Mammary epithelial cell (primary cell): ENCODE measurements at regions of chr6 and their contacts with region 1.

Region 1: GRCh38 chr6:129498950-129499842 is 210.8 kb downstream of the ARHGAP18 start:
- DNase-seq: peak; percentile 75
- H3K4me3 ChIP-seq: peak overlapping the region; percentile 4 to 23 (median 7)
- H3K27ac ChIP-seq: peak overlapping the region; percentile 90
- H3K4me1 ChIP-seq: peaks cover 68% of the 10 kb centered on the region
- H3K27me3 ChIP-seq: no peaks in the 10 kb centered on the region
- CTCF ChIP-seq: peak; percentile 32 to 54

Region 2: GRCh38 chr6:129469070-129469662 is 30.0 kb before region 1 on chr6:
- CTCF ChIA-PET with region 1: no interaction called
- dilution Hi-C with region 1: no loop called
- in situ Hi-C with region 1: no loop called
- intact Hi-C with region 1: loop called (anchors 1 kb)
- DNase-seq: peak; percentile 11
- H3K4me3 ChIP-seq: no peak overlapping the region
- H3K27ac ChIP-seq: no peak overlapping the region
- H3K4me1 ChIP-seq: no peaks in the 10 kb centered on the region
- H3K27me3 ChIP-seq: no peaks in the 10 kb centered on the region
- CTCF ChIP-seq: peak in 1 of 2 donors; percentile 43

Region 3: DNA sequence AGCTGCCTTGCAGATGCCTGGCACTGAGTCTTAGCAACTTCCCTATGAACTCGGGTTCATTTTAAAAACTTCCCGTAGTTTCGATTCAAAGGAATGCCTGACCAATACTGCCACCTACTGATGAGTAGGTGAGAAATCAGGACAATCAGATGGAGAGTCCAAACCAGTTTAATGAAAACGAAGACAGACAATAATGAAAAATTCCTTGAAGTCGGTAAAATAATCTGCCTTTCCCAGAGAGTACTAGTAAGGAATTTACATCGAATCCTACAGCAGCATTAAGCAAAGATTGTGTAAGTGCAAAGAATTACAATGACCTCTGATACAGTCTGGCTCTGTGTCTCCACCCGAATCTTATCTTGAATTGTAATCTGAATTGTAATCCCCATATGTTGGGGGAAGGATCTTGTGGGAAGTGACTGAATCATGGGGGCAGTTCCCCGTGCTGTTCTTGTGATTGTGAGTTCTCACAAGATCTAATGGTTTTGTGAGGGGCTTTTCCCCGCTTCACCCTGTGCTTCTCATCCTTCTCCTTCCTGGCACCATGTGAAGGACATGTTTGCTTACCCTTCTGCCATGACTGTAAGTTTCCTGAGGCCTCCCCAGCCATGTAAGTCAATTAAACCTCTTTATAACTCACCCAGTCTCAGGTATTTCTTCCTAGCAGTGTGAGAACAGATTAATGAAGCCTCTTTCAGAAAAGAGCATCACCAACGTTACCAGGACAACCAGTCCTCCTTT is 76.4 kb after region 1 on chr6:
- CTCF ChIA-PET with region 1: interaction called, 4 read pairs
- dilution Hi-C with region 1: no loop called
- in situ Hi-C with region 1: no loop called
- intact Hi-C with region 1: loop called (anchors 1 kb)
- DNase-seq: peak; percentile 70
- H3K4me3 ChIP-seq: no peak overlapping the region
- H3K27ac ChIP-seq: peak overlapping the region; percentile 41
- H3K4me1 ChIP-seq: peaks cover 8% of the 10 kb centered on the region
- H3K27me3 ChIP-seq: no peaks in the 10 kb centered on the region
- CTCF ChIP-seq: peak; percentile 69 to 76

Region 4: GRCh38 chr6:129667621-129668020 is 168.4 kb after region 1 on chr6:
- CTCF ChIA-PET with region 1: no interaction called
- dilution Hi-C with region 1: no loop called
- in situ Hi-C with region 1: no loop called
- intact Hi-C with region 1: loop called (anchors 5 kb)
- DNase-seq: peak; percentile 57
- H3K4me3 ChIP-seq: no peak overlapping the region
- H3K27ac ChIP-seq: no peak overlapping the region
- H3K4me1 ChIP-seq: peaks cover 21% of the 10 kb centered on the region
- H3K27me3 ChIP-seq: no peaks in the 10 kb centered on the region
- CTCF ChIP-seq: no peak

Region 5: DNA sequence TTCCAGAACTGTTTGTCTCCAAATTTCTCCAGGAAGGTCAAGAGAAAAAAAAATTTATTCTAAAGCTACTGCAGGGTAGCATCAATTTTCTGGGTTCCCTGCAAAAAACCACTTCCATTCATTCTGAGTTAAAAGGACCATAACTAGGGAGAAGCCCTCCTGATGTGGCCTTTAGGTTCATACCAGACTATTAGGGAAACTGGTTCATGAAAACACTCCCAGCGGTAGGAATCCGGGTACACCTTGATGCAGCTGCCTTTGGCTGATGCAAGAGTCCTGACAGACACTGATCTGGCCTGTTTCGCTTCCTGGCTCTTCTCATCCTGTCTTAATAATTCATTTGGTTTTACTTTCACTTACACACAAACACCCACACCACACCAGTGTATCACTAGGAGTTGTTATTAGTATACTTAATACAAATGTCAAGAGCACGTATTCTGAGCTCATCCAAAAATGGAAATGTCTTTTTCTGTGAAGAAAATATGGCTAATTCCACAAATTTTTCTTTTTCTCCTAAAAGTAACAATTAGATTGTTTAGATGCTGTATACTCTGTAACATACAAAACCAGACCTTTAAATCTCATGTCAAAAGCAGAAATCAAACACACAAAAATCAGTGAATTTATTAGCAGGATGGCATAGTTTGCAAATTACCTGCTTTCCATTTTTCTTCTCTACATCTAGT is 249.2 kb after region 1 on chr6:
- CTCF ChIA-PET with region 1: no interaction called
- dilution Hi-C with region 1: no loop called
- in situ Hi-C with region 1: loop called (anchors 25 kb)
- intact Hi-C with region 1: loop called (anchors 2 kb)
- DNase-seq: peak; percentile 70
- H3K4me3 ChIP-seq: no peak overlapping the region
- H3K27ac ChIP-seq: peak overlapping the region; percentile 91
- H3K4me1 ChIP-seq: peaks cover 43% of the 10 kb centered on the region
- H3K27me3 ChIP-seq: no peaks in the 10 kb centered on the region
- CTCF ChIP-seq: peak in 1 of 2 donors; percentile 42

Region 6: GRCh38 chr6:130020907-130021629 is 521.9 kb after region 1 on chr6:
- CTCF ChIA-PET with region 1: no interaction called
- dilution Hi-C with region 1: no loop called
- in situ Hi-C with region 1: no loop called
- intact Hi-C with region 1: loop called (anchors 2 kb)
- DNase-seq: peak; percentile 84
- H3K4me3 ChIP-seq: peak overlapping the region; percentile 57 to 78 (median 76)
- H3K27ac ChIP-seq: no peak overlapping the region
- H3K4me1 ChIP-seq: peaks cover 8% of the 10 kb centered on the region
- H3K27me3 ChIP-seq: no peaks in the 10 kb centered on the region
- CTCF ChIP-seq: peak; percentile 73 to 88